ENCODE measurements at regions of chr13 and their contacts with region 1.

Region 1: GRCh38 chr13:36051082-36051481 is 80.1 kb downstream of the DCLK1 start:
- DNase-seq: no peak
- H3K4me3 ChIP-seq: no peak overlapping the region
- H3K27ac ChIP-seq: no peak overlapping the region
- H3K4me1 ChIP-seq: no peaks in the 10 kb centered on the region
- H3K27me3 ChIP-seq: no peaks in the 10 kb centered on the region
- CTCF ChIP-seq: no peak
- POLR2A ChIP-seq: no peak

Region 2: GRCh38 chr13:35448465-35448864 is 602.6 kb before region 1 on chr13:
- intact Hi-C with region 1: no loop called
- DNase-seq: no peak
- H3K4me3 ChIP-seq: no peak overlapping the region
- H3K27ac ChIP-seq: no peak overlapping the region
- H3K4me1 ChIP-seq: no peaks in the 10 kb centered on the region
- H3K27me3 ChIP-seq: no peaks in the 10 kb centered on the region
- CTCF ChIP-seq: no peak
- POLR2A ChIP-seq: no peak

Region 3: DNA sequence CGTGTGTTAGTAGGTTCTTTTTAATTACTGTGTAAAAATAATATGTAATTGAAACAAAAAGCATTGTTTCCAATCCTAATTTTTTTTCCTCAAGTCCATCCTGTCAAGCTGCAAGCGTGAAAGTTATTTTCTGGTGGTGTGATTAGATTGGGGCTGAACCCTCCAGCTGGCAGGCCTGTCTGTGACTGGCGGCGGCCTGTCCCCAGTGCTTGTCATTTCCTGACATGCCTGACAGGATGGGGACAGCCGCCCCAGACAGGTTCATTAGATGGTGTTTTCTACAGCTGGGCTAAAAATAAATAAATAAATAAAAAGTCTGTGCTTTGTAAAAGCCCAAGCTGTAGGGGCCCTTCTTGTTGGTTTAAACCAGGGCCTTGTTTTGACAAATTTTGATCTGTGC is 520.9 kb before region 1 on chr13:
- intact Hi-C with region 1: no loop called
- DNase-seq: no peak
- H3K4me3 ChIP-seq: no peak overlapping the region
- H3K27ac ChIP-seq: no peak overlapping the region
- H3K4me1 ChIP-seq: no peaks in the 10 kb centered on the region
- H3K27me3 ChIP-seq: no peaks in the 10 kb centered on the region
- CTCF ChIP-seq: no peak
- POLR2A ChIP-seq: no peak

Region 4: GRCh38 chr13:35838356-35838755 is 212.7 kb before region 1 on chr13:
- intact Hi-C with region 1: no loop called
- DNase-seq: no peak
- H3K4me3 ChIP-seq: no peak overlapping the region
- H3K27ac ChIP-seq: peak overlapping the region; percentile 69 to 78
- H3K4me1 ChIP-seq: no peaks in the 10 kb centered on the region
- H3K27me3 ChIP-seq: no peaks in the 10 kb centered on the region
- CTCF ChIP-seq: no peak
- POLR2A ChIP-seq: peak; percentile 16

Region 5: GRCh38 chr13:36074659-36075058 is 23.6 kb after region 1 on chr13:
- intact Hi-C with region 1: no loop called
- DNase-seq: no peak
- H3K4me3 ChIP-seq: no peak overlapping the region
- H3K27ac ChIP-seq: no peak overlapping the region
- H3K4me1 ChIP-seq: no peaks in the 10 kb centered on the region
- H3K27me3 ChIP-seq: no peaks in the 10 kb centered on the region
- CTCF ChIP-seq: no peak
- POLR2A ChIP-seq: no peak

Region 6: DNA sequence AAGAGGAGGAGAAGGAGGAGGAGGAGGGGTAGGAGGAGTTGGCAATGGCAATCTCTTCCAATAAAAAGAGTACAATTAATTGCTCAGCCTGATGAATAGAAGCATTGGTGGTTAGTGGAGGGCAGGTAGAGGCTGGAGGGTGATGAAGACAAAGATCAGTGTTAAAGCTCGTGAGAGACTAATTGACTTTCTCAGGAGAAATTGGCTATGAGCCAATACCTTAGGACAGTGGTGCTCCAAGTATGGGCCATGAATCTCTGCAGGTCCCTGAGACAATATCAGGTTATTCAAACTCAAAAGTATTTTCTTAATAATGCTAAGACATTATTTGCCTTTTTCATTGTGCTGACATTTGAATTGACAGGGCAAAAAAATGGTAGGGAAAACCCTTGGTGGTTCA is 599.0 kb after region 1 on chr13:
- intact Hi-C with region 1: loop called (anchors 5 kb)
- DNase-seq: no peak
- H3K4me3 ChIP-seq: no peak overlapping the region
- H3K27ac ChIP-seq: no peak overlapping the region
- H3K4me1 ChIP-seq: no peaks in the 10 kb centered on the region
- H3K27me3 ChIP-seq: no peaks in the 10 kb centered on the region
- CTCF ChIP-seq: no peak
- POLR2A ChIP-seq: no peak

Measured in breast epithelium (tissue), 4 donors.